ENCODE measurements at regions of chr11 and their contacts with region 1.

Region 1: GRCh38 chr11:65569973-65570918 is at the start of gene ZNRD2:
- DNase-seq: peak; percentile 96 to 99 (median 98)
- ATAC-seq: peak; percentile 69
- H3K4me3 ChIP-seq: peak within 1 kb of the TSS; percentile 92 to 94
- H3K4me3 Mint-ChIP-seq: peak within 1 kb of the TSS; percentile 99
- H3K27ac ChIP-seq: peak within 1 kb of the TSS; percentile 94 to 99
- H3K27ac Mint-ChIP-seq: peak within 1 kb of the TSS; percentile 99
- H3K4me1 ChIP-seq: peaks cover 76% of the 10 kb centered on the region
- H3K4me1 Mint-ChIP-seq: peaks cover 76% of the 10 kb centered on the region
- H3K27me3 ChIP-seq: no peaks in the 10 kb centered on the region
- H3K27me3 Mint-ChIP-seq: no peaks in the 10 kb centered on the region
- CTCF ChIP-seq: no peak
- total RNA-seq, gene ZNRD2: 35.6 to 41.4 TPM

Region 2: GRCh38 chr11:65040847-65041621 is 529.2 kb before region 1 on chr11 and contains the start of gene SAC3D1:
- CTCF ChIA-PET with region 1: no interaction called
- POLR2A ChIA-PET with region 1: no interaction called
- intact Hi-C with region 1: loop called in 1 of 2 experiments (anchors 5 kb)
- DNase-seq: peak; percentile 67 to 94 (median 85)
- ATAC-seq: peak; percentile 90
- H3K4me3 ChIP-seq: peak within 1 kb of the TSS; percentile 63 to 76
- H3K4me3 Mint-ChIP-seq: peak within 1 kb of the TSS; percentile 93
- H3K27ac ChIP-seq: peak within 1 kb of the TSS; percentile 34 to 82
- H3K27ac Mint-ChIP-seq: peak within 1 kb of the TSS; percentile 91
- H3K4me1 ChIP-seq: peaks cover 17% of the 10 kb centered on the region
- H3K4me1 Mint-ChIP-seq: peaks cover 15% of the 10 kb centered on the region
- H3K27me3 ChIP-seq: no peaks in the 10 kb centered on the region
- H3K27me3 Mint-ChIP-seq: no peaks in the 10 kb centered on the region
- CTCF ChIP-seq: no peak
- total RNA-seq, gene SAC3D1: 0.57 to 0.94 TPM

Region 3: GRCh38 chr11:65425105-65425970 is 144.9 kb before region 1 on chr11:
- CTCF ChIA-PET with region 1: no interaction called
- POLR2A ChIA-PET with region 1: interaction called, 6 read pairs
- intact Hi-C with region 1: loop called in 1 of 2 experiments (anchors 5 kb)
- DNase-seq: peak; percentile 72 to 98 (median 82)
- ATAC-seq: peak; percentile 48
- H3K4me3 ChIP-seq: peak overlapping the region; percentile 76 to 95
- H3K4me3 Mint-ChIP-seq: peak overlapping the region; percentile 94
- H3K27ac ChIP-seq: peak overlapping the region; percentile 99 to 100
- H3K27ac Mint-ChIP-seq: peak overlapping the region; percentile 98
- H3K4me1 ChIP-seq: peaks cover 53% of the 10 kb centered on the region
- H3K4me1 Mint-ChIP-seq: peaks cover 66% of the 10 kb centered on the region
- H3K27me3 ChIP-seq: no peaks in the 10 kb centered on the region
- H3K27me3 Mint-ChIP-seq: no peaks in the 10 kb centered on the region
- CTCF ChIP-seq: no peak

Region 4: DNA sequence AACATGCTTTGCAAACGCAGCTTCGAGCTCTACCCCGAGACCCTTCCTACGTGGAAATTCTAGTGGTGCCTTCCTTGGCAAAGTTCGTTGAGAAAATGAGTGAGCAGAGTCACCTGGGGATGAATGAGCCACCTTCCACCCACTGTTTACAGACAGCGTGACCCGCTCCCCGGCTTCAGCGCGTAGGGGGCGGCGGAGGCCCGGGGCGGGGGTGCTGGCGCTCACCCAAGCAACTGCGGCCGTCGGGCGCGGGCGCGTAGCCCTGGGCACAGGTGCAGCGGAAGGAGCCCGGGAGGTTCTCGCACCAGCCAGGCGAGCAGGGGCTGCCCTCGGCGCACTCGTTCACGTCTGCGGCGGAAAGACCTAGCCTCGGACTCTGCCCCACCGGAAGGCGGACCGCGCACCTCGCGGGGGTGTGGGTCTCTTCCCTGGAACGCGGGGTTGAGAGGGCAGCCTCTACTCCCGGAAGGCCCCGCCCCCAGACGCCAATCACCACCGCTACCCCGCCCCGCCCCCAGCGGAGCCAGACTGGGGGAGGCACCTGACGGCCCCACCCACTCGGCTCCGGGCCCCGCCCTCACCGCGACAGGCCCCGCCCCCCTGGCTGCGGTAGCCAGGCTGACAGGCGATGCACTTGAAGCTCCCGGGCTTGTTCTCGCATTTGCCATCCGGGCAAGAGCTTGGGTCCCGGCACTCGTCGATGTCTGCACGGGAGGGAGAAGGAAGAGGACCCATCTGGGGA is 23.9 kb before region 1 on chr11:
- CTCF ChIA-PET with region 1: interaction called, 89 read pairs
- POLR2A ChIA-PET with region 1: interaction called, 50 read pairs
- intact Hi-C with region 1: loop called (anchors 1 kb)
- DNase-seq: peak; percentile 96 to 100 (median 98)
- ATAC-seq: peak; percentile 89
- H3K4me3 ChIP-seq: peak overlapping the region; percentile 49 to 50
- H3K4me3 Mint-ChIP-seq: peak overlapping the region; percentile 82
- H3K27ac ChIP-seq: peak overlapping the region; percentile 62 to 74
- H3K27ac Mint-ChIP-seq: peak overlapping the region; percentile 95
- H3K4me1 ChIP-seq: peaks cover 39% of the 10 kb centered on the region
- H3K4me1 Mint-ChIP-seq: peaks cover 48% of the 10 kb centered on the region
- H3K27me3 ChIP-seq: no peaks in the 10 kb centered on the region
- H3K27me3 Mint-ChIP-seq: no peaks in the 10 kb centered on the region
- CTCF ChIP-seq: no peak

Region 5: DNA sequence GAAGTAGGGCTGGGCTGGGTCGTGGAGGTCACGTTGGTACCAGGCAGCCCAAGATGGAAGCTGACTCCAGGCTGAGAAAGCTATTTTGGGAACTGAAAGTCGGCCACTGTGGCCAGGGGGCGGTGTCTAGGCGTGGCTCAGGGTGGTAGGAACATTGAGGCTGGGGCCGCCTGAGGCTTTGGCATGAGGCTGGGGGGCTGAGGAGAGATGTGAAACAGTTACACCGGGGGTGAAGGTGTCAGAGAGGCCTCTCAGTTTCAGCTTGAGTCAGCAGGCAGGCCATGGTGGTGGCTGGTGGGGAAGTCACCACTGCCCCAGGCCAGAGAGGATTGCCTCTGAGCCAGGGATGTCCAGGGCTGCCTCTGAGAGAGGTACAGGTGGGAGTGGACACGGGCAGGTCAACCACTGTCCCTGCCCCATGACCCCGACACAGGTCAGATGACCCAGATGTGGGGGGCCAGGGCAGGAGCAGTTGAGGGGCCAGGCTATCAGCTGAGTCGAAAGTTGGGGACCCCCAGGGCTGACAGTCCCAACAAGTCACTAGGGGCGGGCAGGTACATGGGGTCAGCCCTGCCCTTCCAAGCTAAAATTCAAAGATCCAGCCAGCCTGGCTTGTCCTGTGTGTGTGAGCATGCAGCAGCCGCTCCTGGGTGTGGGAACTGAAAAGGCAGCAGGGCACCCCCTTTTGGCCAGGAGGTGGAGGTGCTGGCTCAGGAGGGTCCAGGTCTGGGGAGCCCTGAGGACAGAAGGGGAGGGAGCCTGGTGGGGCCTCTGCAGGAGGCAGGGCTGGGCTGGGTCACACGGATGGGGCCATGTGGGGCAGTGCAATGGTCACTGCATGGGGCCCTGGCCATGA is 18.2 kb after region 1 on chr11:
- CTCF ChIA-PET with region 1: interaction called, 43 read pairs
- POLR2A ChIA-PET with region 1: interaction called, 30 read pairs
- intact Hi-C with region 1: loop called (anchors 1 kb)
- DNase-seq: peak; percentile 55 to 88 (median 77)
- ATAC-seq: peak; percentile 95
- H3K4me3 ChIP-seq: no peak overlapping the region
- H3K4me3 Mint-ChIP-seq: no peak overlapping the region
- H3K27ac ChIP-seq: peak overlapping the region in 1 of 2 experiments; percentile 61
- H3K27ac Mint-ChIP-seq: peak overlapping the region; percentile 80
- H3K4me1 ChIP-seq: peaks cover 13% of the 10 kb centered on the region
- H3K4me1 Mint-ChIP-seq: peaks cover 21% of the 10 kb centered on the region
- H3K27me3 ChIP-seq: no peaks in the 10 kb centered on the region
- H3K27me3 Mint-ChIP-seq: no peaks in the 10 kb centered on the region
- CTCF ChIP-seq: peak; percentile 77

Region 6: DNA sequence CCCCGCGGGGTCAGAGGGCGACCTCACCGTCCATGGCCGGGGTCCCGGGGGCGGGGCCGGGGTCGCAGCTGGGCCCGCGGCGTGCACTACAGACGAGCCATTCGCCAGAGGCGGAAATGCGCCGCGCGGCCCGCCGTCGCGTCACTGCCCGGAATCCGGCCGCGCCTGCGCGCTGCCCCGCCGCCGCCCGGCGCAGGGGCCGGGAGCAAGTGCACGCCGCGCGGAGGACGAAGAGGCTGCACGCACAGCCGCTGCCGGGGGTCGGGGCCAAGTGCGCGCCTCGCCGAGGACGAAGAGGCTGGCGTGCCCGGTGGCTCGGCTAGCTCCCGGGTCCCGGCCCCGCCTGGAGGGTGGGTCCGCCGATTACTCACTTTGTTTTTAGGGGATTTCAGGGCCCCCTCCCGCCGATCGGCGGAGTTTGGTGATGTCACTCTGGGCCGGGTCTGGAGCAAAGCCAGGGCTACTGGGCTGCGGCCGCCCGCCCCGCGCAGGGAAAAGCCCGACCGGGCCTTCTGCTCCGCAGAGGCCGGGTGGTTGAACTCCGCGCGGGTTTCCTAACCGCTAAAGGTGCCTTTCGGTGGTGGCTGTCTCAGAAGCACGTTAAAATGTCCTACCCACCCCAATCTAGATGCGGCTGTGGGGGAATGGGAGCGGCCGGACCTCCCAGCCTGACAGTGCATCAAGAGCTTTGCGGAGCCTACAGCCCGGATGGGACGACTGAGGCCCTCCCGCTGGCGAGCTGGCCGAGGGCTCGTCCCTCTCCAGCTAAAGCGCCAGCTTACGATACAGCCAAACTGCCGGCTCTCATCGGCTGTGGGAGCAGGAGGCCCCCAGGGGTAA is 92.8 kb after region 1 on chr11 and contains the start of gene RELA:
- CTCF ChIA-PET with region 1: no interaction called
- POLR2A ChIA-PET with region 1: interaction called, 5 read pairs
- intact Hi-C with region 1: loop called in 1 of 2 experiments (anchors 2 kb)
- DNase-seq: peak; percentile 79 to 95 (median 89)
- ATAC-seq: peak; percentile 83
- H3K4me3 ChIP-seq: peak within 1 kb of the TSS; percentile 77 to 88
- H3K4me3 Mint-ChIP-seq: peak within 1 kb of the TSS; percentile 86
- H3K27ac ChIP-seq: peak within 1 kb of the TSS; percentile 92 to 98
- H3K27ac Mint-ChIP-seq: peak within 1 kb of the TSS; percentile 92
- H3K4me1 ChIP-seq: peaks cover 27% of the 10 kb centered on the region
- H3K4me1 Mint-ChIP-seq: peaks cover 38% of the 10 kb centered on the region
- H3K27me3 ChIP-seq: no peaks in the 10 kb centered on the region
- H3K27me3 Mint-ChIP-seq: no peaks in the 10 kb centered on the region
- CTCF ChIP-seq: no peak
- total RNA-seq, gene RELA: 380 to 384 TPM

Region 7: DNA sequence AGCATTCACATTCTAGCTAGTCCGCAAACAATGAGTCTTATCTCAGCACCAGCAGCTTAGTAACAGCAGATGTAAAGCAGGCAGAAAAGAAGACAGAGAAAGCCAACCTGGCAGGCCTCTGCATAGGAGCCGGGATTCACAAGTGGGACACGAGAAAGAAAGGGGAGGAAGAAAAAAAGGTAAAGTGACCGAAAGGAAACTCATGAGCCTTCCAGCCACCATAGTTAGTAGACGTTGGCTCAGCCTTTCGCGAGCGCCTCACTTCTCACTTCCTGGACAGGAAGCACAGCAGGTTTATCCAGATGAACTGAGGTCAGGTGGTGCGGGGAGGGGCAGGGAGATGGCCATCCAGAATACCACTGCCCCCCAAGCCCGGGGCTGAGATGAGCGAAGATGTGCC is 122.1 kb after region 1 on chr11:
- CTCF ChIA-PET with region 1: no interaction called
- POLR2A ChIA-PET with region 1: no interaction called
- intact Hi-C with region 1: no loop called
- DNase-seq: no peak
- ATAC-seq: no peak
- H3K4me3 ChIP-seq: no peak overlapping the region
- H3K4me3 Mint-ChIP-seq: no peak overlapping the region
- H3K27ac ChIP-seq: no peak overlapping the region
- H3K27ac Mint-ChIP-seq: no peak overlapping the region
- H3K4me1 ChIP-seq: no peaks in the 10 kb centered on the region
- H3K4me1 Mint-ChIP-seq: no peaks in the 10 kb centered on the region
- H3K27me3 ChIP-seq: no peaks in the 10 kb centered on the region
- H3K27me3 Mint-ChIP-seq: no peaks in the 10 kb centered on the region
- CTCF ChIP-seq: no peak

Measured in CD8-positive, alpha-beta T cell (primary cell).